HepG2 (cell line): ENCODE measurements at regions of chr7 and their contacts with region 1.

Region 1: DNA sequence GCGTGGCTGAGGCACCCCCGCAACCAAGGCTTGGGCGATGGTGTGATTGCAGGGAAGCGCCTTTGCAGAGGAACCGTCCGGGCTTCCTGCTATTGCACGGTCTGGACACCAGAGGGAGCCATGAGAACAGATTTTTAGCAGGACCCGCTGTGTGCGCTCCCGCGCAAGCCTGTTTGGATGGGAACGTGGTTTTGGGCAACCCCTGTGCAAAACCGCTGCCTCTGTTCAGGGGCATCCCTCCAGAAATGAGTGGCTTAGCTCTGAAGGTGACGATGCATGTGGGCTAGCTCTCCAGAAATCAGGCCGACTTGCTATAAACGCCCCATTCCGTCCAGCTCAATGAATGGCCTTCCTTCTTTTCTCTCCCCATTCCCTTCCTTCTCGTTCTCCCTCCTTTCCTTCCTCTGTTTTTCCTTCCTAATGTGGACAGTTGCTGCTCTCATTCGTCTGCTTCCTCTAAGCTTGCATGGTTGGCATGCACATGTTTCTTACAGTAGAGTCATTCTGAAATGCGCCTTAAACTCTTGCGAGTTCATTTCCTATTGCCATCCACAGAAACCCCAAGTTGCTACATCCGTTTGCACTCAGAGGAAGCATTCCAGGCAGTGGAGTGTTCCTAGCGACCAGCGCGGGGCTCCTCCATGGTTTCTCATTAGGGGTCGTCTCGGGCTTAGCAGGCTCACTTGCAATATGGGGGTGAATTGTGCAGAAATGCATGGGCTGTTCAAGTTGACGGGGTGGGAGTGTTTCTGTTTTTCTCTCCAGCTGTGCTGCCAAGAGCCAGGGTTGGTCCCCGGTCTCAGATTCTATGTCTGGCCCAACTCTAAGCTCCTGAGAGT is 302.5 kb upstream of the GALNT17 start:
- DNase-seq: peak; percentile 24
- ATAC-seq: peak; percentile 87
- H3K4me3 ChIP-seq: no peak overlapping the region
- H3K27ac ChIP-seq: peak overlapping the region; percentile 68
- H3K4me1 ChIP-seq: peaks cover 21% of the 10 kb centered on the region
- H3K27me3 ChIP-seq: no peaks in the 10 kb centered on the region
- CTCF ChIP-seq: peak; percentile 91
- EP300 ChIP-seq: no peak
- POLR2A ChIP-seq: no peak
- RAD21 ChIP-seq: peak; percentile 85

Region 2: GRCh38 chr7:70229242-70229641 is 600.2 kb before region 1 on chr7:
- CTCF ChIA-PET with region 1: no interaction called
- POLR2A ChIA-PET with region 1: no interaction called
- in situ Hi-C with region 1: no loop called
- intact Hi-C with region 1: no loop called
- DNase-seq: no peak
- ATAC-seq: no peak
- H3K4me3 ChIP-seq: no peak overlapping the region
- H3K27ac ChIP-seq: no peak overlapping the region
- H3K4me1 ChIP-seq: no peaks in the 10 kb centered on the region
- H3K27me3 ChIP-seq: no peaks in the 10 kb centered on the region
- CTCF ChIP-seq: no peak
- EP300 ChIP-seq: no peak
- POLR2A ChIP-seq: no peak
- RAD21 ChIP-seq: no peak

Region 3: DNA sequence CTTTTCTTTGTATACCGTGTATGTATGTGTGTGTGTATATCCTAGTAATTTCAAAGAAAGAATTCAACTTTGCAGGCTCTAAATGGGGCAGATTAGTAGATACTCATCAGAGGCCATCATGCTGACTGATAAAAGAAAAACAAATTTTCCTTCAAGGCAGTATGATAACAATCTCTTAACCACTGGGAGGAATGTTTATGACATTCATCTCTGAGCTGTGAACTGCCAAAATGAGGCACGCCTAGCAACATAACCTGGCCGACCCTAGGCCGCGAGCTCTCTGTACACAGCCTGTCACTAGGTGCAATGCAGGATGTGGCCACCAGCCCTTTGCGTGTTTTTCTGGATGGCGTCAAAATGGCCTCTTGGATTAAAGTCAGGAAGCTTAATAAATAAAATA is 41.2 kb before region 1 on chr7:
- CTCF ChIA-PET with region 1: no interaction called
- POLR2A ChIA-PET with region 1: no interaction called
- in situ Hi-C with region 1: no loop called
- intact Hi-C with region 1: no loop called
- DNase-seq: no peak
- ATAC-seq: no peak
- H3K4me3 ChIP-seq: no peak overlapping the region
- H3K27ac ChIP-seq: no peak overlapping the region
- H3K4me1 ChIP-seq: peaks cover 22% of the 10 kb centered on the region
- H3K27me3 ChIP-seq: no peaks in the 10 kb centered on the region
- CTCF ChIP-seq: no peak
- EP300 ChIP-seq: no peak
- POLR2A ChIP-seq: no peak
- RAD21 ChIP-seq: no peak

Region 4: GRCh38 chr7:70856866-70857630 is 27.6 kb after region 1 on chr7:
- CTCF ChIA-PET with region 1: interaction called, 5 read pairs
- POLR2A ChIA-PET with region 1: no interaction called
- in situ Hi-C with region 1: no loop called
- intact Hi-C with region 1: loop called (anchors 2 kb)
- DNase-seq: peak; percentile 39
- ATAC-seq: peak; percentile 44; the same call in 1 of the 3 replicates
- H3K4me3 ChIP-seq: no peak overlapping the region
- H3K27ac ChIP-seq: no peak overlapping the region
- H3K4me1 ChIP-seq: no peaks in the 10 kb centered on the region
- H3K27me3 ChIP-seq: no peaks in the 10 kb centered on the region
- CTCF ChIP-seq: peak; percentile 77
- EP300 ChIP-seq: no peak
- POLR2A ChIP-seq: no peak
- RAD21 ChIP-seq: peak; percentile 64

Region 5: DNA sequence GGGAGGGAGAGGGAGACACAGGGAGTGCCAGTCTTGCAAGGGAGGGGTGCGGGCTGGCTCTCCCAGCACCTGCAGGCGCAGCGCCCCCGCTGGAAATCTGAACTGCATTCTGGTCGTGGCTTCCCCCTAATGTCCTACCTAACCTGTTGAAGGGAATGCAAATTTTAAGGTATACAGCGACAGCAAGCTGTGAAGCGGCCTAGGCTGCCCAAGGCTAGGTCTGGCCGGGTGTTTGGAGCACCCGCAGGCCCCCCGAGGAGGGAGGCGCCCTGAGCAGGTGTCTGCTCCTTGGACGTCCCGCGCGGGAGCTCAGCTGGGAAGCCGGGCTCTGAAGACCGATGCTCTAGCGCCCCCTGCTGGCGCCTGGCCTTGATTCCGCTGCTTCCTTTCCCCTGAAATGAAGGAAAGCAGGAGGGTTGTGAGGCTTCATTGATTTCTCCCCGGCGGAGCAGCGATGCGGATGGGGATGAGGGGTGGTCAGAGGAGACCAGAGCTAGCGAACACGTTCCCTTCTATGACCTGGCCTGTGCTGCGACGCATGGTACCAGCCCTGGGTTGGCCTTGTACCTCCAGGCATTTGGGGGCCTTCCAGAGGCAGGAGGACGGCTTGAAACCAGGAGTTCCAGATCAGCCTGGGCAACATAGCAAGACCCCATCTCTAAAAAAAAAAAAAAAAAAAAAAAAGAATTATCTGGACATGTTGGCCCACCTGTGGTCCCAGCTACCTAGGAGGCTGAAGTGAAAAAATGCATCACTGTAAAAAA is 903.8 kb after region 1 on chr7:
- CTCF ChIA-PET with region 1: interaction called, 23 read pairs
- POLR2A ChIA-PET with region 1: no interaction called
- in situ Hi-C with region 1: no loop called
- intact Hi-C with region 1: loop called (anchors 1 kb)
- DNase-seq: peak; percentile 52
- ATAC-seq: peak; percentile 87
- H3K4me3 ChIP-seq: 0 out of 6 replicates have a peak overlapping the region, but pooled peaks of 1 of the 3 experiments have one; percentile 16
- H3K27ac ChIP-seq: no peak overlapping the region
- H3K4me1 ChIP-seq: no peaks in the 10 kb centered on the region
- H3K27me3 ChIP-seq: no peaks in the 10 kb centered on the region
- CTCF ChIP-seq: peak; percentile 93
- EP300 ChIP-seq: no peak
- POLR2A ChIP-seq: no peak
- RAD21 ChIP-seq: peak; percentile 87